ENCODE measurements at regions of chr19 and their contacts with region 1.

Region 1: GRCh38 chr19:12965017-12965811 is 4.2 kb upstream of the DAND5 start:
- DNase-seq: peak; percentile 74
- H3K27ac ChIP-seq: peak overlapping the region; percentile 77
- CTCF ChIP-seq: peak; percentile 98

Region 2: GRCh38 chr19:12890787-12891552 is 74.2 kb before region 1 on chr19 and contains the start of gene GCDH:
- CTCF ChIA-PET with region 1: interaction called, 10 read pairs
- POLR2A ChIA-PET with region 1: interaction called, 6 read pairs
- DNase-seq: peak; percentile 98
- H3K27ac ChIP-seq: peak within 1 kb of the TSS; percentile 58
- CTCF ChIP-seq: no peak

Region 3: GRCh38 chr19:12933287-12934072 is 31.7 kb before region 1 on chr19 and contains the start of gene FARSA:
- CTCF ChIA-PET with region 1: no interaction called
- POLR2A ChIA-PET with region 1: no interaction called
- DNase-seq: peak; percentile 91
- H3K27ac ChIP-seq: peak within 1 kb of the TSS; percentile 75
- CTCF ChIP-seq: no peak

Region 4: GRCh38 chr19:13283871-13284270 is 318.7 kb after region 1 on chr19:
- CTCF ChIA-PET with region 1: no interaction called
- POLR2A ChIA-PET with region 1: no interaction called
- DNase-seq: no peak
- H3K27ac ChIP-seq: no peak overlapping the region
- CTCF ChIP-seq: no peak

Measured in RWPE1 (cell line).